Activated CD8-positive, alpha-beta memory T cell treated with anti-CD3 and anti-CD28 coated beads, Interleukin-2, amount 10 ng/mL, durations not matched to agents 7 days and 5 days (primary cell): ENCODE measurements at regions of chr2 and their contacts with region 1.

Region 1: DNA sequence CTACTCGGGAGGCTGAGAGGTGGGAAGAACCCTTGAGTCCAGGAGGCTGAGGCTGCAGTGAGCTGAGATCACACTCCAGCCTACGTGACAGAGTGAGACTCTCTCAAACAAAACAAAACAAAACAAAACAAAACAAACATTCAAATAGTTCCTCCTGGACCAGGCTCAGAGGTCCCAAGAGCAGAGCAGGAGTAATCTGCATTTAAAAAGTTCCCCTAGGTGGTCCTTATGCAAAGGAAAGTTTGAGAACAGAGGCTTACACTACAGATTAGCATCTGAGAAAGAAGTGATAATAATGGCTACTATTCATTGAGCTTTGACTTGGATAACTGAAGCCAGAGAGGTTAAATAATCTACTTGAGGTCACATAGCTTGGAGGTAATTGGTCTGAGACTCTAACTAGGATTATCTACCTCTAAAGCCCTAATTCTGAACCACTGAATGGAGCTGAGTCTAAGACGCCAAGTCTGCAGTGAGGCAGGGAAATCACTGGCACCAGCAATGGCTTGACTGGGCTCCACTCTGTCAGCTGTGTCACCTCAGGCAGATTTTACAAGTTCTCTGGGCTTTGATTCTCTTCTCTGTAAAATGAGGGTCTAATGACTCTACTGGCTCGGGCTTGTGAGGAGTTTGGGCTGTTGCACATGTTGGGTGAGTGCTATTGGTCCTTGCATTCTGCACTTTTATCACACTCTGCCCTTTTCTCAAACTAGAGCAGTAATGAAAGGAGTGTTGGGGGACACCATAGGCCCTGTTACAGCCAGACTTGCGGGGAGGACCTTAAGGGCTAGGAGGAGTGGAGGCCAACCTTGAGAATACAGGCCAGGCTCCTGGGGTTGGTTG is 29.2 kb upstream of the DLX2 start:
- DNase-seq: no peak
- ATAC-seq: no peak
- H3K4me3 Mint-ChIP-seq: no peak overlapping the region
- H3K27ac Mint-ChIP-seq: no peak overlapping the region
- H3K4me1 Mint-ChIP-seq: no peaks in the 10 kb centered on the region
- H3K27me3 Mint-ChIP-seq: peaks cover 24% of the 10 kb centered on the region

Region 2: DNA sequence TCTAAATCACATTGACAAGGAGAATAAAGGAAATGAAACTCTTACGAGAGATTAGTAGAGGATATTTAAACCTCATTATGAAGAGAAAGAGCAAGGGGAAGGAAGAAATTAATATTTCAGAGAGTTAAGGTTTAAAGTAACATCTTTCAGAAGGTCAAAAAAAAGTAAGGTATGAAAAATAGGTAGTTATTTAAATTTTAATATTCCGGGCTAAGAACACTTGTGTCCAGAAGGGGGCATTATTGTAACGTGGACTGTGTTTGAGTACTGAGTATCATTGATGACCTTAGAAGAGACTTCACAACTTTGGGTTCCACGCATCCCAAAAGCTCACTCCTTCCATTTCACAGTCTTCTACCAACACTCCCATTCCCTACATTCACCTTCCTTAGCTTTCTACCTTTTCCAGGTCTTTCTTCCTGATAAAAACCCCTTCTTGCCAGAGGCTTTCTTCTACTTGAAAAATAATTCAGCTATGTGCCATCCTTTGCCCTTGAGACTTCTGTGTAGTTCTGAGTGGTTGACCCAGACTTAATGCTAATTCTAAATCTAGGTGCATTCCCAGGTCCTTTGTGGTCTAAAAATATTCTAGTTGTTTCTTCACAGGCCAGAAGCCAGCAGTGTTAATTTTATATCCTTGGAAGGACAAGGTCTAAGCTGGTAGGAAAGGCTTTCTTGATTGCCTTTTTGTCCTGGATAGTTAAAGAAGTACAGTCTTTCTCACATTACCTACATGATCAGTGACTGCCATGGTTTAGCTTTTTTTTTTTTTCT is 428.2 kb before region 1 on chr2:
- CTCF ChIA-PET with region 1: interaction called, 23 read pairs
- DNase-seq: no peak
- ATAC-seq: no peak
- H3K4me3 Mint-ChIP-seq: no peak overlapping the region
- H3K27ac Mint-ChIP-seq: no peak overlapping the region
- H3K4me1 Mint-ChIP-seq: peaks cover 2% of the 10 kb centered on the region
- H3K27me3 Mint-ChIP-seq: no peaks in the 10 kb centered on the region

Region 3: GRCh38 chr2:171939743-171940071 is 192.2 kb before region 1 on chr2:
- CTCF ChIA-PET with region 1: no interaction called
- DNase-seq: no peak
- ATAC-seq: no peak
- H3K4me3 Mint-ChIP-seq: no peak overlapping the region
- H3K27ac Mint-ChIP-seq: no peak overlapping the region
- H3K4me1 Mint-ChIP-seq: peaks cover 16% of the 10 kb centered on the region
- H3K27me3 Mint-ChIP-seq: no peaks in the 10 kb centered on the region

Region 4: GRCh38 chr2:172113617-172114016 is 18.3 kb before region 1 on chr2:
- CTCF ChIA-PET with region 1: interaction called, 28 read pairs
- DNase-seq: no peak
- ATAC-seq: no peak
- H3K4me3 Mint-ChIP-seq: no peak overlapping the region
- H3K27ac Mint-ChIP-seq: no peak overlapping the region
- H3K4me1 Mint-ChIP-seq: no peaks in the 10 kb centered on the region
- H3K27me3 Mint-ChIP-seq: peaks cover 32% of the 10 kb centered on the region

Region 5: DNA sequence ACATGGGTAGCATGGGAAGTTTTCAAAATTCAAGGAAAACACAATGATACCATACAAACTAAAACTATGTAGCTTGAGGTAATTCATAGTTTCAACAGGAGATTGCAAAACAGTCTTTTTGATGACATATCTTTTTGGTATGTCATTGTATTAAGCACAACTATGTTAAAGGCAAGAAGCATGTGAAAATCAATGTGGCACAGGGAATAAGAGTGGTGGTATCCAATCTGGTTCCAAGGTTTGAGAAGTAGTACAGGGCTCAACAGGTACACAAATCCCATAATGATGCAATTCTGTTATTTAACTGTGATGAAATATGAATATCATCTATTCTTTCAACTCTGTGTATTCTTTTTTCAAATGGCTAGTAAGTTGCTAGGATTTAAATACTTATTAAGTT is 12.8 kb before region 1 on chr2:
- CTCF ChIA-PET with region 1: interaction called, 28 read pairs
- DNase-seq: no peak
- ATAC-seq: no peak
- H3K4me3 Mint-ChIP-seq: no peak overlapping the region
- H3K27ac Mint-ChIP-seq: no peak overlapping the region
- H3K4me1 Mint-ChIP-seq: no peaks in the 10 kb centered on the region
- H3K27me3 Mint-ChIP-seq: peaks cover 25% of the 10 kb centered on the region